ENCODE measurements at regions of chr5 and their contacts with region 1.

Region 1: GRCh38 chr5:98768160-98769005 is 5.1 kb upstream of the RGMB start:
- DNase-seq: peak; percentile 46
- ATAC-seq: peak; percentile 53
- H3K4me3 ChIP-seq: peak overlapping the region; percentile 62 to 81 (median 72)
- H3K27ac ChIP-seq: no peak overlapping the region
- H3K4me1 ChIP-seq: peaks cover 24% of the 10 kb centered on the region
- H3K27me3 ChIP-seq: peaks cover 0 to 5% of the 10 kb centered on the region in 2 experiments; a peak in 1 of 5 replicates
- CTCF ChIP-seq: peak; percentile 78
- EP300 ChIP-seq: no peak
- POLR2A ChIP-seq: no peak
- RAD21 ChIP-seq: no peak; the same call in 1 of the 2 replicates

Region 2: GRCh38 chr5:98796197-98796972 is 28.0 kb after region 1 on chr5:
- CTCF ChIA-PET with region 1: interaction called, 6 read pairs
- POLR2A ChIA-PET with region 1: interaction called, 5 read pairs
- in situ Hi-C with region 1: no loop called
- intact Hi-C with region 1: loop called (anchors 1 kb)
- DNase-seq: peak; percentile 62
- ATAC-seq: peak; percentile 88
- H3K4me3 ChIP-seq: no peak overlapping the region
- H3K27ac ChIP-seq: no peak overlapping the region
- H3K4me1 ChIP-seq: no peaks in the 10 kb centered on the region
- H3K27me3 ChIP-seq: no peaks in the 10 kb centered on the region
- CTCF ChIP-seq: peak; percentile 71
- EP300 ChIP-seq: no peak
- POLR2A ChIP-seq: no peak
- RAD21 ChIP-seq: peak; percentile 47; the same call in 1 of the 2 replicates

Region 3: DNA sequence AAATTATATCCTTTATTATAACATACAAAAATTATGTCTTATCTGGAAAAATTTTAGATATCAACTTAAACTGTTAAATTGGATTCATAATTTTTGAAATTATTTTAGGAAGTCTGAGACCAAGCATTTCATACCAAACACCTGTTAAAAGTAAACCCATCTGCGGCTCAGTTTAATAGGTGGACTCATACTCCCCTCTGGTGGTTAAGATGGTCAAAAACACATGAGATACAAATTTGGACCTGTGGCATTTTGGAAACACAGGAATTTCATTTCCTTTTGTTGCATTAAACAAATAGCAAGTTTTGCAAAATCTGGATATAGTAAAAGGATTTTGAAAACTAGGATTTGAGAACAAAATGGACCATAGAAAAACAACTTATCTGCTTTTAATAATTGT is 58.8 kb after region 1 on chr5:
- CTCF ChIA-PET with region 1: no interaction called
- POLR2A ChIA-PET with region 1: no interaction called
- in situ Hi-C with region 1: no loop called
- intact Hi-C with region 1: loop called (anchors 2 kb)
- DNase-seq: peak; percentile 32
- ATAC-seq: peak; percentile 74
- H3K4me3 ChIP-seq: no peak overlapping the region
- H3K27ac ChIP-seq: no peak overlapping the region
- H3K4me1 ChIP-seq: no peaks in the 10 kb centered on the region
- H3K27me3 ChIP-seq: no peaks in the 10 kb centered on the region; a peak in 1 of 5 replicates
- CTCF ChIP-seq: peak; percentile 68
- EP300 ChIP-seq: no peak
- POLR2A ChIP-seq: no peak
- RAD21 ChIP-seq: peak; percentile 13; the same call in 1 of the 2 replicates